K562 (cell line): ENCODE measurements at regions of chr2 and their contacts with region 1.

Region 1: GRCh38 chr2:126527836-126528507 is 128.0 kb upstream of the GYPC start:
- DNase-seq: peak; percentile 47 to 80 (median 62)
- ATAC-seq: peak; percentile 99
- H3K4me3 ChIP-seq: no peak overlapping the region
- H3K27ac ChIP-seq: no peak overlapping the region
- H3K4me1 ChIP-seq: no peaks in the 10 kb centered on the region
- H3K27me3 ChIP-seq: no peaks in the 10 kb centered on the region; a peak in 1 of 5 replicates
- CTCF ChIP-seq: peak; percentile 76 to 78 (median 77)
- EP300 ChIP-seq: no peak
- POLR2A ChIP-seq: no peak
- RAD21 ChIP-seq: peak; percentile 80 to 89

Region 2: GRCh38 chr2:126244937-126245336 is 283.0 kb before region 1 on chr2:
- CTCF ChIA-PET with region 1: no interaction called
- POLR2A ChIA-PET with region 1: no interaction called
- in situ Hi-C with region 1: no loop called
- intact Hi-C with region 1: loop called (anchors 10 kb)
- DNase-seq: peak; percentile 34 to 80 (median 49)
- ATAC-seq: peak; percentile 98
- H3K4me3 ChIP-seq: no peak overlapping the region
- H3K27ac ChIP-seq: no peak overlapping the region
- H3K4me1 ChIP-seq: no peaks in the 10 kb centered on the region
- H3K27me3 ChIP-seq: no peaks in the 10 kb centered on the region
- CTCF ChIP-seq: peak; percentile 81 to 90 (median 87)
- EP300 ChIP-seq: no peak
- POLR2A ChIP-seq: no peak
- RAD21 ChIP-seq: peak; percentile 57 to 83

Region 3: DNA sequence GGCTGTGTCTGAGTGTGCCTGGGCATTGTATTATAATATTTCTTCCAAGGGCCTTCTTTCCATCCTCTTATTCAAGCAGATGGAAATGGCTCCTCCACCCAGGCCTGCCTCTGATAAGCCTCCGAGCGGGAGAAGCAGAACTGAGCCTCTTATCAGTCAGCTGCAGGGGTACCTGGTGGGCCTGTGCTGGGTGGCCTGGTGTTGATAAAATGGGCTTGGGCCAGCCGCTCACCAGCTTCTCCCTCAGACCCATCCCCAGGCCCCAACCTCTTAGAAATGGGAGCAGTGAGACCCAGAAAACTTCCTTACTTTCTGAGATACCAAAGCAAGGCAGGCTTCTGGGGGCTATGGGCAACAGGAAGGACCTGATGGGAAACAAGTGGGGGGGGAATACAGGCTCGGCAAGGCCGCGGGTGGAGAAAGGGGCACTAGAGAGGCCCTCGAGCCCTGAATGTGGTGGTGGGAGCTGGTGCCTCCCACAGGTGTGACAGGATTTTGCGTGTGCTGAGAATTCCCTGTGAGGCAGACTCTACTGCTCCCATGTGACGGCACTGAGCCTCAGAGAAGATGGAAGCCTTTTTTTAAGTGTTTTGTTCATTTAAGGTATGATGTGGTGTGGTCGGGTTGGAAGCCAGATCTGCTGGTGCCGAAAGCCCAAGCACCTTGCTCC is 146.2 kb after region 1 on chr2:
- CTCF ChIA-PET with region 1: interaction called, 3 read pairs
- POLR2A ChIA-PET with region 1: interaction called, 3 read pairs
- in situ Hi-C with region 1: no loop called
- intact Hi-C with region 1: loop called (anchors 2 kb)
- DNase-seq: peak; percentile 87 to 97 (median 92)
- ATAC-seq: peak; percentile 85
- H3K4me3 ChIP-seq: peak overlapping the region; percentile 5; the same call in 1 of the 2 replicates
- H3K27ac ChIP-seq: peak overlapping the region; percentile 78
- H3K4me1 ChIP-seq: peaks cover 48 to 69% of the 10 kb centered on the region in 2 experiments
- H3K27me3 ChIP-seq: no peaks in the 10 kb centered on the region
- CTCF ChIP-seq: peak; percentile 25 to 61 (median 41); a peak in 4 of 6 replicates
- EP300 ChIP-seq: peak; percentile 96
- POLR2A ChIP-seq: no peak
- RAD21 ChIP-seq: no peak; a peak in 1 of 4 replicates

Region 4: DNA sequence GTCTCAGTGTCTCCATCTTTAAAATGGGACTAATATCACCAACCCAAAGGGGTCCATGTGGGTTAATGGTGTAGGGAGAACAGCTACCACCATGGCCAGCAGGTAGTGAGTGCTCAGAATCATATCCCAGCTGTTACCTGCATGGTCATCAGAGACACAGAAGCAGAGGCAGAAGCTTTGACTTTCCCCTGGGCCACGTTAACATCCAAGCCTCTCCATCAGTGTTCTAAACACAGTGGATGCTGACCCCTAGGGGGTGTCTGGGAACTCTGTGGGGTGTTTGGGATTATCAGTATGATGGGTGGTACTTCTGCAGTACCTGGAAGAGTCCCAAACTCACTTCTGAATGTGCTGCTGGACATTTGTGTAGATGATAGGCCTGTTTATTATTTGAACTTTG is 221.6 kb after region 1 on chr2:
- CTCF ChIA-PET with region 1: interaction called, 4 read pairs
- POLR2A ChIA-PET with region 1: no interaction called
- in situ Hi-C with region 1: no loop called
- intact Hi-C with region 1: loop called (anchors 1 kb)
- DNase-seq: peak in 2 of 4 experiments; percentile 37 to 49
- ATAC-seq: peak; percentile 90
- H3K4me3 ChIP-seq: no peak overlapping the region
- H3K27ac ChIP-seq: no peak overlapping the region
- H3K4me1 ChIP-seq: no peaks in the 10 kb centered on the region; a peak in 1 of 5 replicates
- H3K27me3 ChIP-seq: peaks cover 0 to 20% of the 10 kb centered on the region in 2 experiments; a peak in 1 of 5 replicates
- CTCF ChIP-seq: peak; percentile 52 to 73 (median 58)
- EP300 ChIP-seq: no peak
- POLR2A ChIP-seq: no peak
- RAD21 ChIP-seq: peak; percentile 38 to 74; a peak in 2 of 4 replicates

Region 5: GRCh38 chr2:126776692-126777619 is 249.0 kb after region 1 on chr2:
- CTCF ChIA-PET with region 1: interaction called, 11 read pairs
- POLR2A ChIA-PET with region 1: interaction called, 4 read pairs
- in situ Hi-C with region 1: loop called (anchors 5 kb)
- intact Hi-C with region 1: loop called (anchors 1 kb)
- DNase-seq: peak; percentile 78 to 85 (median 80)
- ATAC-seq: peak; percentile 95
- H3K4me3 ChIP-seq: peak overlapping the region; percentile 48
- H3K27ac ChIP-seq: no peak overlapping the region
- H3K4me1 ChIP-seq: peaks cover 4 to 20% of the 10 kb centered on the region in 2 experiments; a peak in 4 of 5 replicates
- H3K27me3 ChIP-seq: peaks cover 2 to 50% of the 10 kb centered on the region in 2 experiments; a peak in 3 of 5 replicates
- CTCF ChIP-seq: peak; percentile 91 to 97 (median 96)
- EP300 ChIP-seq: no peak
- POLR2A ChIP-seq: no peak
- RAD21 ChIP-seq: peak; percentile 97

Region 6: GRCh38 chr2:126971481-126972278 is 443.7 kb after region 1 on chr2:
- CTCF ChIA-PET with region 1: no interaction called
- POLR2A ChIA-PET with region 1: no interaction called
- in situ Hi-C with region 1: no loop called
- intact Hi-C with region 1: loop called (anchors 10 kb)
- DNase-seq: peak; percentile 77 to 84 (median 80)
- ATAC-seq: peak; percentile 96
- H3K4me3 ChIP-seq: no peak overlapping the region
- H3K27ac ChIP-seq: no peak overlapping the region
- H3K4me1 ChIP-seq: peaks cover 0 to 22% of the 10 kb centered on the region in 2 experiments; a peak in 2 of 5 replicates
- H3K27me3 ChIP-seq: peaks cover 16 to 59% of the 10 kb centered on the region in 2 experiments; a peak in 4 of 5 replicates
- CTCF ChIP-seq: peak; percentile 86 to 92 (median 89)
- EP300 ChIP-seq: no peak
- POLR2A ChIP-seq: no peak
- RAD21 ChIP-seq: peak; percentile 84 to 90